ENCODE measurements at regions of chr10 and their contacts with region 1.

Region 1: GRCh38 chr10:87850742-87851205 is 12.6 kb downstream of the KLLN start:
- DNase-seq: peak; percentile 10 to 76 (median 38)
- ATAC-seq: peak; percentile 77 to 98 (median 90)
- H3K4me3 ChIP-seq: no peak overlapping the region
- H3K4me3 Mint-ChIP-seq: no peak overlapping the region
- H3K27ac ChIP-seq: no peak overlapping the region
- H3K27ac Mint-ChIP-seq: no peak overlapping the region
- H3K4me1 ChIP-seq: peaks cover 2 to 5% of the 10 kb centered on the region in 2 experiments
- H3K4me1 Mint-ChIP-seq: peaks cover 0 to 13% (median 8%) of the 10 kb centered on the region in 3 donors
- H3K27me3 ChIP-seq: no peaks in the 10 kb centered on the region
- H3K27me3 Mint-ChIP-seq: no peaks in the 10 kb centered on the region

Region 2: DNA sequence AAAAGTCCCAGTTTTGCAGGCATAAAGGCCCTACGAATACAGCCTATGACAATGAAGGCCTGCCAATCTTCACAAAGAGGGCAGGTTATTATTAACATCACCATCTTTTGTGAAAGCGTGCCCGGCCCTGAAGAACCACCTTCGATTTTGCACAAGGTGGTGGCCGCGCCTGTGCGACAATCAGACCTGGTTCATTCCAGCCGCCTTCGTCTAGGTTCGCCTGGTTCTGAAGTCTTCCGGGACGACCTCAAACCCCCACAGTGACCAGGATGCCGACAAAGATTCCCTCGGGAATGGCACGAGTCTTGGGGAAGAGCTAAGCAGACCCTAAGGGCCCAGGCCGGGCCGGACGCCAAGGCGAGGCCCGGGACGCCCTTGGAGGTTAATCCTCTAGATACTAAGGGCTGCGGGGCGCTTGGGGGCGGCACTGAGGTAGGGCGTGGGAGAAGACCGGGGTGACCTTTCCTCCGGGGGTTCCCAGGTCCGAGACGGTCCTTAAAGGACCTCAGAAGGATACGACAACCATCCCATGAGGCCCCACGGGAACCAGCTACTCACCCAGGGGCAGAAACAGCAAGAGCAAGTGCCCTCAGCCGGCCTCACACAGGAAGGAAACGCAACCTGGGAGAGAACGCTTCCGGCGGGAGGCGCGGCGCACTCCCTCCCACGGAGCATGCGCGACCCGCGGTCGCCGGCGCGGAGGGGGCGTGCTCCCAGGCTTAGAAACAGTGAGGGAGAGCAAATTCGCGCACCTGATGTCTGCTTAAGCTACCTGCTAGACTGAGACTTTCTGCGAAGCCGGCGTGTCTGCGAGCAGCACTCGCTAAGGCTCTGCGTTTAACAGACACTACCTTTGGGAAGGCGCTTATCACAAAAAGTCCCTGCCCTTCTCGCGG is 32.9 kb before region 1 on chr10 and contains the start of gene ATAD1:
- CTCF ChIA-PET with region 1: interaction called, 5 to 10 read pairs
- POLR2A ChIA-PET with region 1: interaction called in 1 of 2 experiments, 8 read pairs
- DNase-seq: peak; percentile 80 to 95 (median 87)
- ATAC-seq: peak; percentile 88 to 93 (median 92)
- H3K4me3 ChIP-seq: peak within 1 kb of the TSS; percentile 79 to 87
- H3K4me3 Mint-ChIP-seq: peak within 1 kb of the TSS; percentile 90 to 99 (median 97)
- H3K27ac ChIP-seq: peak within 1 kb of the TSS; percentile 82
- H3K27ac Mint-ChIP-seq: peak within 1 kb of the TSS; percentile 94 to 98
- H3K4me1 ChIP-seq: peaks cover 7 to 27% of the 10 kb centered on the region in 2 experiments
- H3K4me1 Mint-ChIP-seq: peaks cover 38 to 40% (median 39%) of the 10 kb centered on the region in 3 donors
- H3K27me3 ChIP-seq: no peaks in the 10 kb centered on the region
- H3K27me3 Mint-ChIP-seq: no peaks in the 10 kb centered on the region
- total RNA-seq, gene ATAD1: 35.2 to 43.8 (median 42.1) TPM

Region 3: DNA sequence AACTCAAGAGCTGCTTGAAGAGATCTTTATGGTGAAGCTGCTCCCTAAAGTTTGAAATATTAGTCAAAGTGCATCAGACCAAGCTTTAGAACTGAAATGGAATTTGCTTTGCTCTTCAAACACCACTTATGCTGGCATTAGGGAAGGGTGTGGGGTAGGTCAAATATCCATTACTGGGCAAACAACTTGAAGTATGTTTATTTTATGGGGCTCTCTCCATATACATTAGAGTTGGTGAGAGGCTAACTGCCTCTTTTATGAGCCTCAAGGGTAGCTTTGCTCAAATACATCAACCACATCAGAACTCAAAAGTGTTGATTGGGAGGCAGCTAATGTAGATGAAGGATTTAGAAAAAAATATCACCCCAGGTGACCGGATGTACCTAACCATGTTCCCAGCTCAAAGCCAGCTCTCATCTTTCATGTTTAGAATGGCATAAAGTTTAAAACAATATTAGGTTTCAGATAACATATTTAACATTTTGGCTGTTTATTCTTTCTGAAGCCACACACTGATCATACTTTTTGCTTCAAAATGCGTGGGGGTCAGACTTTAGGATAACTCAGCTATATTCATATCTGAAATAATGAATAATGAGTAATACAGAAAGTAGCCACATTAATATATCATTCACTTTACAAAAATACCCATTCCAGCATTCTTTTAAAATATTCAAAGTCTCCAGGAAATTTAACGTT is 331.3 kb after region 1 on chr10:
- CTCF ChIA-PET with region 1: no interaction called
- POLR2A ChIA-PET with region 1: no interaction called
- DNase-seq: no peak
- ATAC-seq: no peak
- H3K4me3 ChIP-seq: no peak overlapping the region
- H3K4me3 Mint-ChIP-seq: no peak overlapping the region
- H3K27ac ChIP-seq: no peak overlapping the region
- H3K27ac Mint-ChIP-seq: no peak overlapping the region
- H3K4me1 ChIP-seq: no peaks in the 10 kb centered on the region
- H3K4me1 Mint-ChIP-seq: no peaks in the 10 kb centered on the region
- H3K27me3 ChIP-seq: no peaks in the 10 kb centered on the region
- H3K27me3 Mint-ChIP-seq: no peaks in the 10 kb centered on the region

Region 4: GRCh38 chr10:88553116-88553752 is 702.5 kb after region 1 on chr10:
- CTCF ChIA-PET with region 1: interaction called, 8 to 10 read pairs
- POLR2A ChIA-PET with region 1: no interaction called
- DNase-seq: peak in 30 of 35 experiments; percentile 2 to 71 (median 17)
- ATAC-seq: peak; percentile 72 to 85 (median 78)
- H3K4me3 ChIP-seq: no peak overlapping the region
- H3K4me3 Mint-ChIP-seq: no peak overlapping the region
- H3K27ac ChIP-seq: no peak overlapping the region
- H3K27ac Mint-ChIP-seq: no peak overlapping the region
- H3K4me1 ChIP-seq: no peaks in the 10 kb centered on the region
- H3K4me1 Mint-ChIP-seq: no peaks in the 10 kb centered on the region
- H3K27me3 ChIP-seq: no peaks in the 10 kb centered on the region
- H3K27me3 Mint-ChIP-seq: no peaks in the 10 kb centered on the region